ENCODE measurements at regions of chr21 and their contacts with region 1.

Region 1: GRCh38 chr21:15592271-15592860 is 137.4 kb upstream of the USP25 start:
- DNase-seq: peak; percentile 35
- H3K4me3 ChIP-seq: no peak overlapping the region
- H3K27ac ChIP-seq: no peak overlapping the region
- H3K4me1 ChIP-seq: no peaks in the 10 kb centered on the region
- H3K27me3 ChIP-seq: no peaks in the 10 kb centered on the region
- CTCF ChIP-seq: peak; percentile 50 to 63

Region 2: GRCh38 chr21:14259747-14260146 is 1332.6 kb before region 1 on chr21:
- CTCF ChIA-PET with region 1: no interaction called
- dilution Hi-C with region 1: no loop called
- in situ Hi-C with region 1: no loop called
- intact Hi-C with region 1: loop called (anchors 5 kb)
- DNase-seq: peak; percentile 43
- H3K4me3 ChIP-seq: no peak overlapping the region
- H3K27ac ChIP-seq: no peak overlapping the region
- H3K4me1 ChIP-seq: no peaks in the 10 kb centered on the region
- H3K27me3 ChIP-seq: no peaks in the 10 kb centered on the region
- CTCF ChIP-seq: peak; percentile 38 to 59

Region 3: GRCh38 chr21:14403681-14404318 is 1188.6 kb before region 1 on chr21:
- CTCF ChIA-PET with region 1: no interaction called
- dilution Hi-C with region 1: no loop called
- in situ Hi-C with region 1: no loop called
- intact Hi-C with region 1: loop called (anchors 10 kb)
- DNase-seq: peak; percentile 12
- H3K4me3 ChIP-seq: no peak overlapping the region
- H3K27ac ChIP-seq: no peak overlapping the region
- H3K4me1 ChIP-seq: no peaks in the 10 kb centered on the region
- H3K27me3 ChIP-seq: no peaks in the 10 kb centered on the region
- CTCF ChIP-seq: peak; percentile 55 to 63

Region 4: DNA sequence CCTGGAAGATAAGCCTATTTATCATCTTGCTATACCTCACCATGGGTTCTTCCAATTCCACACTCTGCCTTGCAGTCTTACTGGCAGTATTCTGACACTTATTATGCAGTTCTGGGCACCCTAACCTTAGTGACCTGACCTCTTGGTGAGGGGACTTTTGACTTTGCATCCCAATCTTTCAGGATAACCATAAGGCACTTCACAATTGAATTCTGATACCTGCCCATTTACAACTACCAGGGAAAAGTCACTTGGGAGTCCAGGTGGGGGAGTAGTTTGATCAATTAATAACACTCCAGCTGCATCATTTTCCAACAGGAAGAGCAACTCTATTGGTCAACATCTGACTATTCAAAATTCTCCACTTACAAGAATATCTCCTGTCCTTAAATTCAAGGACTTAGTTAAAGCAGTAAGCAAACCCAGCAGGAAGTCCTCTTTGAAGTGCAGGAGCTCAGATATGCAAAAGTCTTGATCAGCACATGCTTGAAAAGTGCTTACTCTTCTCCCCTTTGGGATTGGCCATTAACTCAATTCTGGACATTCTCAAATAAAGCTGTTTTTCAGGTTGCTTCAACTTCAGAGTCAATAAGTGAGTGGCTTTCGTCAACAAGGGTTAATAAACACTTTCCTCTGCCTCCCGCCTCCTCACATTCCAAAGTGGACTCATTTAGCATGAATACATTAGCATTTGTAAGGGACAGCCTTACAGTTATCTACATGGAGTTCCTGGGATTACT is 350.2 kb before region 1 on chr21:
- CTCF ChIA-PET with region 1: no interaction called
- dilution Hi-C with region 1: no loop called
- in situ Hi-C with region 1: no loop called
- intact Hi-C with region 1: loop called (anchors 2 kb)
- DNase-seq: peak; percentile 37
- H3K4me3 ChIP-seq: no peak overlapping the region
- H3K27ac ChIP-seq: no peak overlapping the region
- H3K4me1 ChIP-seq: peaks cover 27% of the 10 kb centered on the region
- H3K27me3 ChIP-seq: no peaks in the 10 kb centered on the region
- CTCF ChIP-seq: peak in 1 of 2 donors; percentile 39

Region 5: DNA sequence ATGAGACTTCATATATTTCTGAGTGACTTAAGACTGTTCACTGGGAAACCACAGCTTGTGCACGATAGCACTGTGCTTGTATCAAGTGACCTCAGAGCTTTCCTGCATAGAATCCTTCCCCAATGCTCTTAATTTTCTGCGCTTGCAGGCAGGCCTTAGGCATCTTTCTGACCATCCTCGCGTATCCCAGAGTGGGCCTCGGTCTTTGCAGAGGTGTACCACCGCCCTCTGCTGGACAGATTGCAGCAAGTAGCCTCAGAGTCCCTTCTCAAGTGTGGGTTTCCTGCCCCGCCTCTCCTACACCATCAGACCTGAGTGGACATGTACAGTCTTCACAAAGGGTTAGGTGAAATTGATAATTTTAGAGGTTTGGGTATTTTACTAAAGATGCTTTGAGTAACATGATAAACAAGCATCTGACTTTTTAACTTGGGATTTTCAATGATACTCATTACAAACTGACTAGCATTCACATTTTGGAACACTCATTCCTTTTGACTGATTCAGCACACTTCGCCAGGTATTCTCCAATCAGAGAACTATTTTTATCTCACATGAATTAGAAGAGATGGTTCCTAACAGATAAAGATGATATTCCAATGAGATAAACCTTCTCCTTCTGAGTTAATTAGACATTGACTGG is 109.1 kb before region 1 on chr21:
- CTCF ChIA-PET with region 1: no interaction called
- dilution Hi-C with region 1: no loop called
- in situ Hi-C with region 1: no loop called
- intact Hi-C with region 1: loop called (anchors 10 kb)
- DNase-seq: peak; percentile 78
- H3K4me3 ChIP-seq: no peak overlapping the region
- H3K27ac ChIP-seq: no peak overlapping the region
- H3K4me1 ChIP-seq: peaks cover 4% of the 10 kb centered on the region
- H3K27me3 ChIP-seq: no peaks in the 10 kb centered on the region
- CTCF ChIP-seq: peak; percentile 90

Region 6: GRCh38 chr21:15549675-15550074 is 42.7 kb before region 1 on chr21:
- CTCF ChIA-PET with region 1: no interaction called
- dilution Hi-C with region 1: no loop called
- in situ Hi-C with region 1: no loop called
- intact Hi-C with region 1: no loop called
- DNase-seq: no peak
- H3K4me3 ChIP-seq: no peak overlapping the region
- H3K27ac ChIP-seq: no peak overlapping the region
- H3K4me1 ChIP-seq: no peaks in the 10 kb centered on the region
- H3K27me3 ChIP-seq: no peaks in the 10 kb centered on the region
- CTCF ChIP-seq: no peak

Region 7: DNA sequence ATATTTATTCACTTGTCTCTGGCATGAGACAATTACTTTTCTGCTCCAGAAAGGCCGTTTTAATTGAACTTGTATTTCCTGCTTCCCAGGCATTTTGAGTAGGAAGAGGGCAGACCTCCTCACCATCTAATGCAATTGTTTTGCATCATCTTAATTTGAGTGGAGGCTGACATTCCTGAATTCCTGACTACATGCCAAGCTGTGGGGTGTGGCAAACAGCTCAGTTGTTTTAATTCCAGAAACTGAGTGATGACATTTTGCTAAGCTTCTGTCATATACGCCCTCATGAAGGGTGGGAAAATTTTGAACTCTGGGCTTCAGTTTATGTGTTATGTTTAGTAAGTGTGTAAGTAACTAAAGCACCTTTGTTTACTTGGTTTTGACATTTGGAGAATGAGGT is 12.1 kb after region 1 on chr21:
- CTCF ChIA-PET with region 1: no interaction called
- dilution Hi-C with region 1: no loop called
- in situ Hi-C with region 1: no loop called
- intact Hi-C with region 1: no loop called
- DNase-seq: peak; percentile 68
- H3K4me3 ChIP-seq: no peak overlapping the region
- H3K27ac ChIP-seq: no peak overlapping the region
- H3K4me1 ChIP-seq: peaks cover 10% of the 10 kb centered on the region
- H3K27me3 ChIP-seq: no peaks in the 10 kb centered on the region
- CTCF ChIP-seq: no peak

Region 8: GRCh38 chr21:15826147-15826780 is 233.9 kb after region 1 on chr21:
- CTCF ChIA-PET with region 1: no interaction called
- dilution Hi-C with region 1: no loop called
- in situ Hi-C with region 1: no loop called
- intact Hi-C with region 1: loop called (anchors 1 kb)
- DNase-seq: peak; percentile 66
- H3K4me3 ChIP-seq: no peak overlapping the region
- H3K27ac ChIP-seq: no peak overlapping the region
- H3K4me1 ChIP-seq: no peaks in the 10 kb centered on the region
- H3K27me3 ChIP-seq: no peaks in the 10 kb centered on the region
- CTCF ChIP-seq: peak; percentile 71 to 72

Region 9: DNA sequence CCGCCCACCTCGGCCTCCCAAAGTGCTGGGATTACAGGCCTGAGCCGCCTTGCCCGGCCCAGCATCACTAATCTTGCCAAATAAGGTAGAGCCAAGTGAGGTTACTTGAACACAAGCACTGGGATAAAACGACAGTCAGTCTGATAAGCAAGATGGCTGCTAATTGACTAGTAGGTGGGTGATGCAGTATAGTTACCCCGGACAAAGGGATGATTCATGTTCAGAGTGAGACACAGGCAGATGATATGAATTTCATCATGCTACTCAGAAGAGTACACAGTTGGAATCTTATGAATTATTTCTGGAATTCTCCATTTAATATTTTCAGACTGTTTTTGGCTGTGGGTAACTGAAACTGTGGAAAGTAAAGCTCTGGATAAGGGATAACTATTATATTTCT is 315.8 kb after region 1 on chr21:
- CTCF ChIA-PET with region 1: no interaction called
- dilution Hi-C with region 1: no loop called
- in situ Hi-C with region 1: no loop called
- intact Hi-C with region 1: no loop called
- DNase-seq: peak; percentile 9
- H3K4me3 ChIP-seq: no peak overlapping the region
- H3K27ac ChIP-seq: no peak overlapping the region
- H3K4me1 ChIP-seq: no peaks in the 10 kb centered on the region
- H3K27me3 ChIP-seq: no peaks in the 10 kb centered on the region
- CTCF ChIP-seq: no peak